Caco-2 (cell line): ENCODE measurements at regions of chr2 and their contacts with region 1.

Region 1: GRCh38 chr2:116223912-116224311 is 1590.6 kb upstream of the DDX18 start:
- DNase-seq: no peak
- H3K4me3 ChIP-seq: no peak overlapping the region
- H3K4me3 Mint-ChIP-seq: no peak overlapping the region
- H3K27ac Mint-ChIP-seq: no peak overlapping the region
- H3K4me1 ChIP-seq: no peaks in the 10 kb centered on the region
- H3K4me1 Mint-ChIP-seq: no peaks in the 10 kb centered on the region
- H3K27me3 ChIP-seq: no peaks in the 10 kb centered on the region
- H3K27me3 Mint-ChIP-seq: no peaks in the 10 kb centered on the region
- CTCF ChIP-seq: no peak

Region 2: DNA sequence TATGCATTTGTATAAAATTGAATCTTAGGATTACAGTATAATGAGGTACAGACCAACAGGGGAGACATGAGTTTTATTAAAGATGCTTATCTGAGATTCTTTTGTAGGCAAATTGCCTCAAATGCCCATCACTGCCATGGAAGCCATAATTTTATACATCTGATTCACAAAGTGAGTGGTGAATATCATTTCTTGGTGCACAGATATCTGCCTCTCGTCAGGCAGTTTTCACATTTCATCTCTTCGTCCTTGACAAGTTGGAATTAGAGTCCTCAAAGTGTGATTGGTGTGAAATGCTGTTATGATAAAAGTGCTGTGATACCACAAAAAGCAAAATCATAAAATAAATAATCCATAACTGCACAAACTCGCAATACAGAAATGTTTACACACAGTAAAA is 12.2 kb before region 1 on chr2:
- CTCF ChIA-PET with region 1: no interaction called
- POLR2A ChIA-PET with region 1: no interaction called
- intact Hi-C with region 1: loop called (anchors 1 kb)
- DNase-seq: no peak
- H3K4me3 ChIP-seq: no peak overlapping the region
- H3K4me3 Mint-ChIP-seq: no peak overlapping the region
- H3K27ac Mint-ChIP-seq: no peak overlapping the region
- H3K4me1 ChIP-seq: no peaks in the 10 kb centered on the region
- H3K4me1 Mint-ChIP-seq: no peaks in the 10 kb centered on the region
- H3K27me3 ChIP-seq: no peaks in the 10 kb centered on the region
- H3K27me3 Mint-ChIP-seq: peaks cover 4% of the 10 kb centered on the region
- CTCF ChIP-seq: no peak

Region 3: DNA sequence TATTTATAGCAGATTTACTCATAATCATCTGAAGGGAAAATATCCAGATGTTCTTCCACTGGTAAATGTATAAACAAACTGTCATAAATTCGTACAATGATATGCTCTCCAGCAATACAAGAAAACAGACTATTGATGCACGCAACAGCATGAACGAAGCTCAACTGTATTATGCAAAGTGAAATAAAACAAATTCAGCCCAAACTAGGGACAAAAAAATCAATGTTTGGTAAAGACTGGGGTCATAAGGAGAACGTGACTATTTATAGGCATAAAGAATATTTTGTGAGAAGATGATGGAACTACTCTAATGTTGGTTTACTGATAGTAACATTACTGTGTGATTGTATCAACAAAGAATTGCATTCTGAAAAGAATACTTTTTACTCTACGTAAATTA is 313.9 kb after region 1 on chr2:
- CTCF ChIA-PET with region 1: no interaction called
- POLR2A ChIA-PET with region 1: no interaction called
- intact Hi-C with region 1: no loop called
- DNase-seq: no peak
- H3K4me3 ChIP-seq: no peak overlapping the region
- H3K4me3 Mint-ChIP-seq: no peak overlapping the region
- H3K27ac Mint-ChIP-seq: no peak overlapping the region
- H3K4me1 ChIP-seq: no peaks in the 10 kb centered on the region
- H3K4me1 Mint-ChIP-seq: no peaks in the 10 kb centered on the region
- H3K27me3 ChIP-seq: no peaks in the 10 kb centered on the region
- H3K27me3 Mint-ChIP-seq: no peaks in the 10 kb centered on the region
- CTCF ChIP-seq: no peak